Activated CD8-positive, alpha-beta T cell treated with anti-CD3 and anti-CD28 coated beads for 36 hours (primary cell): ENCODE measurements at regions of chr12 and their contacts with region 1.

Region 1: DNA sequence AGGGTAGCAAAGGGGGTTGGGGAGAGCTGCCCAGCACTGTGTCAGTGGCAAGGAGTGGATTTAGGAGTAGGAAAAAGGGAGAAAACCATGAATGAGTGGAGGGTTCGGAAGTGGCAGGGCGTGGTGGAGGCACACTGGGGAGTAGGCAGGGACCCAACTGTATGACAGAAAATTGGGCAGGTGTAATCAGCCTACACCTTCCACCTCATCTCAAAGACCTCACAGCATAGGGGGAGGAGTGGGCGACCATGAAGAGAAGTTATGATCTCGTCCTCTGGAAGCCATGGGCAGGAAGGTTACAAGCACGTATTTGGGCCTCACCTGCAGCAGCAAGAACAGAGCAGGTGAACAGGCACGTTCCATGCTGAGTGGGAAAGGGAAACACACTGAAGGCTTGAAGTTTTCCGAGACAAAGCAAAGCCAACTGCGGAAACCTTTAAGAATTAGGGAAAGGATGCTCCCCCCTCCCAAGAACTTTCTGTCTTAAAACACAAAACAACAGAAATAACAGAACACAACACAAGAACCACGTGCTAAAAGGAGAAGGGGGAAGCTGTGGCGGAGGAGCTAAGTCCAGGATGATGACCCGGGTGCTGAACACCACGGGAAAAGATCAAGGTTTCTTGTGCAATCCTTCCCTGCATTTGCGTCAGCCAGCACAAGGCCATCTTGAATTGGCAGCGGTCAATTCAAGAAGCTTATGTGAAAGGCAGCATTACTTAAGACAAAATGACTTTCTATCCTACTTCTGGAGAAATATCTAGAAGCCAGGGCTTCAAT is 11.2 kb upstream of the CREBL2 start:
- DNase-seq: no peak
- ATAC-seq: no peak
- H3K4me3 Mint-ChIP-seq: no peak overlapping the region
- H3K27ac Mint-ChIP-seq: no peak overlapping the region
- H3K4me1 Mint-ChIP-seq: no peaks in the 10 kb centered on the region
- H3K27me3 Mint-ChIP-seq: peaks cover 1% of the 10 kb centered on the region
- CTCF ChIP-seq: no peak

Region 2: GRCh38 chr12:12611512-12612306 is 11.3 kb after region 1 on chr12 and contains the start of gene CREBL2:
- CTCF ChIA-PET with region 1: no interaction called
- POLR2A ChIA-PET with region 1: interaction called, 11 read pairs
- intact Hi-C with region 1: no loop called
- DNase-seq: peak; percentile 92
- ATAC-seq: peak; percentile 81
- H3K4me3 Mint-ChIP-seq: peak within 1 kb of the TSS; percentile 83
- H3K27ac Mint-ChIP-seq: peak within 1 kb of the TSS; percentile 99
- H3K4me1 Mint-ChIP-seq: peaks cover 52% of the 10 kb centered on the region
- H3K27me3 Mint-ChIP-seq: no peaks in the 10 kb centered on the region
- CTCF ChIP-seq: no peak
- total RNA-seq, gene CREBL2: 12.7 to 14.9 TPM